ENCODE measurements at regions of chr3 and their contacts with region 1.

Region 1: DNA sequence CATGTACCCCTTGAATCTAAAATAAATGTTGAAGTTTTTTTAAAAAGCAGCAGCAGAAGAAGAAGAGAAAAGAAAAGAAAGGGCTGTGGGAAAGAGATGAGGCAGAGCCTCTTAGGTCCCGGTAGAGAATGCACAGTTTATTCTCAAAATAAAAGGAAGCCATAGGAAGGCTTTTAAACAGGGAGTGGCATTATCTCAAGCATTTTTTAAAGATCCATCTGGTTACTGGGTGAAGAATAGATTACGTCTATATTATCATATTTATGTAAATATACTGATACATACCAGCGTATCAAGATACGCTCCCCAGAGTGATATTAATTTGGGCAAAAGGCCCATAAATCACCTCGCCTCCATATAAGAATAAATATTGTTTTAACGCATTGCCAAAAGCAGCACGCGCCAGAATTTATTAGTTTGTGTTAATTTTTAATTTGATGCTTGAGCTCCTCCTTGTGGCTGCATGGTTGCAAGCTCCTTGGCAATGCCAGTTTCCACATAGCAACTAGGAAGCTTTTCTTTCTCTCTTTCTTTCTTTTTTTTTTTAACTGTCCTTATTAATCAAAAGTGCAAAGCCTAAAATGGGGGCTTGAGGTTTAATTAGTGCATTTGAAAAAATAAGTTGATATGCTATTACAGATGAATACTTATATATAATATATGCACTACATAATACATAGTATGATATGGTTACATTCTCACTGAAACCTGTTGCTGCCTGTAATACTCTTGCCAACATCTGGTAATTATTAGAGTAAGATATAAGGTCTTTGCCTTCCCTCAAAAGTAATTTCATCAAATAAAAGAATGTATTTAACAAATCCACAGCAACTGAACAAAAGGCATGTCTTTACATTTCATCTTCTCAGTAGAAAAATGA is 242.8 kb upstream of the UBE2E2 start:
- H3K4me3 Mint-ChIP-seq: no peak overlapping the region
- H3K27ac Mint-ChIP-seq: peak overlapping the region; percentile 61
- H3K4me1 Mint-ChIP-seq: peaks cover 14% of the 10 kb centered on the region
- H3K27me3 Mint-ChIP-seq: peaks cover 3% of the 10 kb centered on the region

Region 2: DNA sequence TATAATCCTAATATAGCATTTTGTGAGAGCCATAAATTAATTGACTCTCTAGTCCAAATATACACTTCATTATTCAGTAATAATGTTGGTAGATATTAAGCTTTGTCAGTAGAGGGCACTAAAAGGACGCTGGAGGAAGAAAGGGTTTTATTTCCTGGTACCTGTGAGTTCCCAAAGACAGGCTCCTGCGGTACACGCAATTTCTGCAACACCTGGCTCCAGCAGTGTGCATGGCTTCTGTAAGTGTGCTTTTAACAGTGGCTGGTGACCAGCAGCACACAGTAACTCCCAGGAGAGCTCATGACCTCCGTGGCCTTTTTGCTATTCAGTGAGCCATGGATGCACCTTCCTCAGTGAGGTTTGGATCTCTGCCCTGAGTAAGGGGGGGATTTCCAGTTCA is 871.1 kb before region 1 on chr3:
- intact Hi-C with region 1: loop called (anchors 10 kb)
- H3K4me3 Mint-ChIP-seq: no peak overlapping the region
- H3K27ac Mint-ChIP-seq: no peak overlapping the region
- H3K4me1 Mint-ChIP-seq: no peaks in the 10 kb centered on the region
- H3K27me3 Mint-ChIP-seq: no peaks in the 10 kb centered on the region

Region 3: DNA sequence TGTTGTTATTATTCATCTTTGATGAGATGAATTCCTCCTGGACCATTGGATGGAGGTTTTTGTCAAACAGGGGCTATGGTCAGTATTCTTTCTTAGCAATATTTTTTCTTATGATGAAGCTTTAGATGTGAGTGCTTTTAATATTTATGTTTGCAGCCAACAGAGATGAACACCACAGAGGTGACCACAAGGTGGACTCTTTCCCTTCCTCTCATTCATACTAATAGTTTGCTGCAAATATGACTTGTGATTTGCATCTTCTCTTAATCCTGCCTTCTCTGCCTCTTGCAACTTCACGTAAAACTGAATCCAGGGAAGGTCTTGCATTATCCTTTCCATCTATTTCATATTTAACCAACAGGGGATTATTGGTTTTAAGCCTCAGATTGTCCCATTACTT is 230.4 kb before region 1 on chr3:
- intact Hi-C with region 1: no loop called
- H3K4me3 Mint-ChIP-seq: no peak overlapping the region
- H3K27ac Mint-ChIP-seq: no peak overlapping the region
- H3K4me1 Mint-ChIP-seq: peaks cover 17% of the 10 kb centered on the region
- H3K27me3 Mint-ChIP-seq: no peaks in the 10 kb centered on the region

Region 4: DNA sequence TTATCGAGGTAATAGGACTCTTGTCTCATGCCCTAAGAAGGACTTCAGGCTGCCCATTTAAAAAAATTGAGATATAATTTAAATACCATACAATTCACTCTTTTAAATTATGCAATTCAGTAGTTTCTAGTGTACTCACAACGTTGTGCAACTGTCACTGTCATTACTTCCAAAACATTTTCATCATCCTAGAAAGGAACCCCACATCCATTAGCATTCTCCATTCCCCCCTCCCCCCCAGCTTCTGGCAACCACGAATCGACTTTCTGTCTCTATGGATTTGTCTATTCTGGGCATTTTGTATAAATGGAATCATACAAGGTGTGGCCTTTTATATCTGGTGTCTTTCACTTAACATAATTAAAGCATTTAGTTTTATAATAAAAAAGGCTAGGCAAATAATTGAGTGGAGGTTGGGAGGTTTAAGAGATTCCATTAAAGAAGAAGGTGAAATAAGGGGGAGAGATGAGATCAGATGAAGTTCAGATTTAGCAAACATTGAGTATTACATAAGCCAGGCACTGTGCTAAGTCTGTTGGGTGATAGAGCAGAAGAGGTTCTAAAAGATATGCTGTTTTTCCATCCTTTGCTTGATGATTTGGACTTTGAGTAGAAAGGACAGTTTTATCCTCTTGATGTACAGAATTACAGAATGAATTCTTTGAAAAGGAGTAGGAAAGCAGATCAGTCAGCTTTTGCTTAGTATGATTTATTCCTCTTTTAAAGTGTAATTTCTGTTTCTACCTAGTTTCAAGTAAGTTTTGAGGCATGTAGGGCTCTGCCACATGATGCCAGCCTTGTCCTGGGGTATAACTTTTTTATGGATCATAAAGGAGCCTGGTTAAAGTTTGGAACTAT is 279.1 kb after region 1 on chr3:
- intact Hi-C with region 1: no loop called
- H3K4me3 Mint-ChIP-seq: no peak overlapping the region
- H3K27ac Mint-ChIP-seq: no peak overlapping the region
- H3K4me1 Mint-ChIP-seq: peaks cover 29% of the 10 kb centered on the region
- H3K27me3 Mint-ChIP-seq: no peaks in the 10 kb centered on the region

Measured in dendritic cell treated with granulocyte-macrophage colony-stimulating factor and Interleukin-4, amounts not matched to agents 40 ng/mL and 50 ng/mL, for 4 days (primary cell).